Ovary (tissue), 10 donors: ENCODE measurements at regions of chr5 and their contacts with region 1.

Region 1: GRCh38 chr5:113294311-113295110 is 140.3 kb downstream of the TSSK1B start:
- DNase-seq: peak; percentile 94 to 97 (median 95)
- H3K4me3 ChIP-seq: peak overlapping the region; percentile 81
- H3K27ac ChIP-seq: peak overlapping the region; percentile 92 to 95
- H3K4me1 ChIP-seq: peaks cover 3% of the 10 kb centered on the region
- H3K27me3 ChIP-seq: no peaks in the 10 kb centered on the region
- CTCF ChIP-seq: peak in 2 of 3 donors; percentile 16 to 30
- EP300 ChIP-seq: no peak
- POLR2A ChIP-seq: peak; percentile 76

Region 2: DNA sequence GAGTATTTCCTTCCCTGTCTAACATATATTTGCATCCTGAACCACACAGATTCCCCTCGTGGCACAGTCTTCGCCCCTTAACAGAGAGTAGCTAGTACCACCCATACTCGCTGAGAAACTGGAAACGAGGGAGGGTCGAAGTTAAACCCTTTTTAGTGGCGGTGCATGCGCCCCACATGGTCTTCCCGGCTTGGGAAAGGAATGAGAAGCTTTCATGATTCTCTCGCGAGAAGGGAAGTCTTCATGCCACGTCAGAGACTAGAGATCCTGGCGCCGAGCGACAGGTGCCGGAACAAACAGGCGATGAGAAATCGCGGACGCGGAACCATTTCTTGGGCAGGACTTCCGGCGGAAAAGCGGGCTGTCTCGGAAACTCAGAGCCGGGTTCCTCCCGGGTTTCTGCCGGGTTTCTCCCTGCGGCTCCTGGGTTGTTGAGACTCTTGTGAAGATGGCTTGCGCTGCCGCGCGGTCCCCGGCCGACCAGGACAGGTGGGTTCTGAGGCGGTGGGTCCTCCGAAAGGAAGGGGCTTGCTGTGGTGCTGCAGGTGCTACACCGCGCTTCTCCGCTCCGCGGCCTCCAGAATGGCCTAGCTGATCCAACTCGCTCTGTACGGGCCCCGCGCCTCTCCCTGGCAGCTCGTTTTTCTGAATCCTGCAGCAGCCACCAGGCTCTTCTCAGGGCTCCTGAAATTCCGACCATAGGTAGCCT is 433.4 kb before region 1 on chr5 and contains the start of gene SRP19:
- intact Hi-C with region 1: no loop called
- DNase-seq: peak; percentile 92 to 95 (median 93)
- H3K4me3 ChIP-seq: peak within 1 kb of the TSS; percentile 84
- H3K27ac ChIP-seq: peak within 1 kb of the TSS in 1 of 2 donors; percentile 46
- H3K4me1 ChIP-seq: peaks cover 11% of the 10 kb centered on the region
- H3K27me3 ChIP-seq: no peaks in the 10 kb centered on the region
- CTCF ChIP-seq: no peak
- EP300 ChIP-seq: no peak
- POLR2A ChIP-seq: peak; percentile 50
- total RNA-seq, gene SRP19: 25.2 to 36.9 (median 26.6) TPM

Region 3: DNA sequence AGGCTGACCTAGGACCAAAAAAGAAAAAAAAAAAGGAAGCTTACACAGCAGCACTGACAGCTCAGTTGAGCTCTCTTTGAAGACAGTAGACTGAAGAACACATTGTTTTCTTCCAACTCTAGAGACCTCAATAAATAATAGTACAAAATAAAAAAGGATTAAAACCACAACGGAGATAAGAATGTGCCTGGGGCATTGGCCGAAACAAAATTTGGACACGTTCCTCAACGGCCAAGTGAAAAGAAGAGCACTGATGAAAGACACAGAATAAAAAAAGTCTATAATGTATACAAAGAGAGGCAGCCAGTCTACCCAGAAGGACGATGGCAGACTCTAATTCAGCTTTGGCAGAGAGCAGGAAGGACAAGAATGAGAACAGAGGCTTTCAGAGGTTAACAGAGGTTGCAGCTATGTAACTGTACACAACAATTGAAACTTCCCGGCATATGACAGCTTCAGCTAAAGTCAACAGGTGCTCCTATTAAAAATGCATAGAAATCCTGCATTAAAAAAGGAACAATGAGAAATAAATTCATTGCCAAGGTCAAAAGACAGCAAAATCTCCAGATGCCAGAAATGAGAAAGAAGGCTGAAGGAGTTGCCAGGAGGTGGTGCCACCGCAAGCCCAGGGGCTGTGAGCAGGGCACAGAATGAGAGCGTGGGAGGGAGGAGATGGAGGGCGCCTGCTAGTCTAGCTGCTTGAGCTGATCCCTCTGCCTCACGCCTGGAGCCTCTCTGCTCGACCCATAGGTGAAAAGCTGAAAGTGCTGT is 204.0 kb before region 1 on chr5:
- intact Hi-C with region 1: loop called in 1 of 4 experiments (anchors 10 kb)
- DNase-seq: peak; percentile 40 to 68 (median 56)
- H3K4me3 ChIP-seq: no peak overlapping the region
- H3K27ac ChIP-seq: peak overlapping the region; percentile 33 to 50
- H3K4me1 ChIP-seq: peaks cover 22% of the 10 kb centered on the region
- H3K27me3 ChIP-seq: no peaks in the 10 kb centered on the region
- CTCF ChIP-seq: no peak
- EP300 ChIP-seq: no peak
- POLR2A ChIP-seq: no peak

Region 4: GRCh38 chr5:113153512-113154097 is 140.9 kb before region 1 on chr5:
- intact Hi-C with region 1: loop called in 1 of 4 experiments (anchors 10 kb)
- DNase-seq: peak in 3 of 5 donors; percentile 40 to 48 (median 42)
- H3K4me3 ChIP-seq: no peak overlapping the region
- H3K27ac ChIP-seq: peak overlapping the region in 1 of 2 donors; percentile 93
- H3K4me1 ChIP-seq: peaks cover 38% of the 10 kb centered on the region
- H3K27me3 ChIP-seq: no peaks in the 10 kb centered on the region
- CTCF ChIP-seq: no peak
- EP300 ChIP-seq: no peak
- POLR2A ChIP-seq: no peak

Region 5: DNA sequence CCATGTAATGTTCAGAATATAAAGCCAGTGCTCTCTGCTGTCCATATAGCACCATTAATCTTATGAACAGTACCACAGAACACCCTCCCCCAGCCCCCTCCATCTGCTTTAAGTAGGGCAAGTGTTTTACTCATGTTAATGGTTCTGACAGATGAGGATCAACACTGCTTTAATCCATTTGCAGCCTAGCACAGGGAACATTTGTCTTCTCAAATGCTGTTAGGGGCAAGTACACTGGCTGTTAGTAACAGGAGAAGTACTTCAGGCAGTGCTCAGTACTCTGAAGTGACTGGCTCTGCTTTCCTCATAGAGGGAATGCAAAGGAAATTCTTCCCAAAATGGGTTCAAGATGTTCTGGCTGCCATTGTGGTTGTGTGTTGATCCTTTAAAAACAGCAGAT is 115.4 kb before region 1 on chr5:
- intact Hi-C with region 1: no loop called
- DNase-seq: no peak
- H3K4me3 ChIP-seq: no peak overlapping the region
- H3K27ac ChIP-seq: no peak overlapping the region
- H3K4me1 ChIP-seq: peaks cover 12% of the 10 kb centered on the region
- H3K27me3 ChIP-seq: no peaks in the 10 kb centered on the region
- CTCF ChIP-seq: no peak
- EP300 ChIP-seq: no peak
- POLR2A ChIP-seq: no peak

Region 6: DNA sequence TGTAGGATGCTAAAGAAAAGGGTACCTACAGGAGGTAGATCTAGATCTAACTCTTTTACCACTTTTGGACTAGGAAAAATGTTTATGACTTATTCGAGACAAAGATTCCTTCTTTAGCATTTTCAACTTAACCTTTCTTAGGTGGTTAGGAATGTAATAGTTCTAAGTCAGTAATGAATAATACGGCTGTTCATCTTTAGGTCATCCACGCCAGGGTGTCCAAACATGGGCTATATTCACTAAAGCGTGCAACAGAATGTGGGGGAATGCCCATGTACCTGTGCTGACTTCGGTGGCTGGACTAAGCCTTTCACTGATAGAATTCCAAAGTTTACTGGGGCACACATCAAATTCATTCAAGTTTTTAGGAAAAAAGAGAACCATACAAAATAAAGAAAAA is 24.4 kb before region 1 on chr5:
- intact Hi-C with region 1: loop called in 1 of 4 experiments (anchors 1 kb)
- DNase-seq: no peak
- H3K4me3 ChIP-seq: no peak overlapping the region
- H3K27ac ChIP-seq: no peak overlapping the region
- H3K4me1 ChIP-seq: peaks cover 31% of the 10 kb centered on the region
- H3K27me3 ChIP-seq: no peaks in the 10 kb centered on the region
- CTCF ChIP-seq: no peak
- EP300 ChIP-seq: no peak
- POLR2A ChIP-seq: no peak

Region 7: DNA sequence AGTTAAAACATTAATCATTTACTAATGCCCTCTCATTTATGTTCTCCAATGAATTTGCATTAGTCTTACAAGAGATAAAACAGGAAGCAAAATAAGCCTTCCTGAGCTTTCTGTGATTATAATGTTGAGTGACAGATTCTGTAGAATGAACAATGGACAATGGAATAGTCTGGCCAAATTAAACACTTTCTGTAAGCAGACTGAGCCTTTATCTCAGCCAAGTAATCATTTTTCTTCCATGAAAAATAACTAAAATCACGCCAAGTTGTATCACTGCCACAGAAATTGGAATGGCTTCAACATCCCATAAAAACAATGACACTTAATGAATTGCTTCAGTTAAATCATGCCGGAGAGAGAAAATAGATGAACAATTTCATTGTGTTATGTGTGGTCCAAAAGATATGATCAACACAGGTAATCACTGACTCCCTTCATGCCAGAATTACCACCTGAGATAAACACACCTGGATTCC is 77.2 kb after region 1 on chr5:
- intact Hi-C with region 1: no loop called
- DNase-seq: no peak
- H3K4me3 ChIP-seq: no peak overlapping the region
- H3K27ac ChIP-seq: no peak overlapping the region
- H3K4me1 ChIP-seq: no peaks in the 10 kb centered on the region
- H3K27me3 ChIP-seq: no peaks in the 10 kb centered on the region
- CTCF ChIP-seq: no peak
- EP300 ChIP-seq: no peak
- POLR2A ChIP-seq: no peak

Region 8: DNA sequence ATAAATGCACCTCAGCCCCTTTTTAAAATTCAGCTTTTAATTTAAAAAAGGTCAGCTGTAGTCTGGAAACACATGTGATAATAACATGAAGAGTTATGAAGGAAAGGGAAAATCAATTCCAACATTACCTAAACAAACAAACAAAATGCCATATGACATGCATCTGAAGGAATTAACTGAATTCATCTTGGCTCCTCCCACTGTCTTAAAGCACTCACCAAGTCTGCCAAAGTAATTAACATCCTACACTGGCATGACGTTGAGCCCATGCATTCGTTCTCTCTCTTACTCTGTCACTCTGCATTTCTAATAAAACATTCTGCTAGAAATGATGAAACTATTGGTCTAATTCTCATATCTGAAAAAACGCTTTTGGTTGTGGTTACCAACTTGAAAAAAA is 102.5 kb after region 1 on chr5:
- intact Hi-C with region 1: no loop called
- DNase-seq: no peak
- H3K4me3 ChIP-seq: no peak overlapping the region
- H3K27ac ChIP-seq: no peak overlapping the region
- H3K4me1 ChIP-seq: no peaks in the 10 kb centered on the region
- H3K27me3 ChIP-seq: no peaks in the 10 kb centered on the region
- CTCF ChIP-seq: no peak
- EP300 ChIP-seq: no peak
- POLR2A ChIP-seq: no peak